Naive thymus-derived CD4-positive, alpha-beta T cell (primary cell): ENCODE measurements at regions of chr14 and their contacts with region 1.

Region 1: DNA sequence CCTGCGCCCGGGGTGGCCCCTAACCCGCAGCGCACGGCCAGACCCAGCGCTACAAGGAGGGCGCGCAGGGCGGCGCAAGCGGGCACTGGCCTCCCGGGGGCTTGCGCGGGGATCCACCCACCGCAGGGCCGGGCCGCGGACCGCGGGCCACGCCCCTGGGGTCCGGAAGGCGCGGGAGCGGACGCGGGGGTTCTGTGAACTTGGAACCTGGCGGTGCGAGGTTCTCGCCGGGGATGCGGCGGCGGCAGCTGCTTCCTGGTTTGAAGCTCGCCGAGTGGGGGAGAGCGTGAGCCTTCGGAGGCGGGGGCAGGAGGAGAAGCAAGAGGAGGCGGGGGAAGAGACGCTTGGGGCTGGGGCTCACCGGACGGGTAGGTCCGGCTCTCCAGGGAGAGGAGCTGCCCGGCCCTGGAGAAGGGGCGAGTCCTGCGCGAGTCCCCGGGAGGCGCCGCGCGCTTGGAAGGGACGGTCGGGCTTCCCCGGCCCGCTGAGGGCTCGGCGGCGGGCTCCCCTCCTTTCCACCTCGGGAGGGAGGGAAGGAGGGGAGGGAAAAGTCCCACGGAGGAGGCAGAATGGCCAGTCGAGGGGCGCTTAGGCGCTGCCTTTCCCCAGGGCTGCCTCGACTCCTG is at the start of gene PRKCH:
- DNase-seq: peak; percentile 67 to 87 (median 84)
- ATAC-seq: peak; percentile 87
- H3K4me3 ChIP-seq: peak within 1 kb of the TSS; percentile 90
- H3K4me3 Mint-ChIP-seq: peak within 1 kb of the TSS in 9 of 10 donors; percentile 95 to 100 (median 98)
- H3K27ac ChIP-seq: peak within 1 kb of the TSS; percentile 91
- H3K27ac Mint-ChIP-seq: peak within 1 kb of the TSS in 8 of 9 donors; percentile 93 to 99 (median 97)
- H3K4me1 ChIP-seq: peaks cover 20 to 22% of the 10 kb centered on the region in 2 donors
- H3K4me1 Mint-ChIP-seq: peaks cover 9 to 26% (median 25%) of the 10 kb centered on the region in 7 donors
- H3K27me3 ChIP-seq: no peaks in the 10 kb centered on the region
- H3K27me3 Mint-ChIP-seq: no peaks in the 10 kb centered on the region
- total RNA-seq, gene PRKCH: 224 to 359 (median 320) TPM

Region 2: DNA sequence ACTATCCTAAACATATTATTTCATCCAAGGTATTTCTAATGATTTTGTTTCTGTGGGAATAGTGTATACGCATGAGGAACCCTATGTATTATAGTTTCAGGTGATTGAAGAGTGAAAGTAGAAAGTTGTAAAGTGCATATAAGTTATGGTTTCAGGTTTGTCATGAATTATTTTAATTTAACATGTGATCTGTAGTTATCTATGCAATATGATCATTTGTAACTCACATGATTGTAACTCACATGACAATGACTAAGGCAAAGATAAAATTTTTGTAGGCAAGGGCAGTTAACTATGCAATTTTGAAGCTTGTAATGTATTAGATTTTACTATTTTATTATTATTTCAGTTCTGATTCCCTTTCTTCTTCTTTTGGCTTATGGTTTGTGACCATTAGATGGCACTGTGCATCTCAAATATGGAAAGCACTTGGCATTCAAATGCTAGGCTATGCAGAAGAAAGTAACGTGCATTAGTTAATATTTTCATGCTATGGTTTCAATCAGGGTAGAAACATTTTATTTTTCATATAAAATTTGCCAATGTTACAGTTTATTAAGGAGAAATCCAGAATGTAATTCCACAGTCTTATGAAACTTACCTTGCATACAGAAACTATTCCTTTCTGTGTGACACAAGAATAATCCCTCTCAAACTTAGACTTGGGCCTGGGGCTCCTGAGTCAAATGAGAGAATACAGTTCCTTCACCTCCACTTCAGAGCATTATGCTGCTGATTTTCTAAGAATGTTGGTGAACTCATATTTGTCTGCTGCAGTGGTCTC is 24.6 kb before region 1 on chr14:
- CTCF ChIA-PET with region 1: interaction called, 3 read pairs
- POLR2A ChIA-PET with region 1: interaction called, 3 read pairs
- intact Hi-C with region 1: loop called (anchors 2 kb)
- DNase-seq: peak in 7 of 9 donors; percentile 38 to 68 (median 52)
- ATAC-seq: peak; percentile 85
- H3K4me3 ChIP-seq: no peak overlapping the region
- H3K4me3 Mint-ChIP-seq: peak overlapping the region in 2 of 10 donors; percentile 20 to 39
- H3K27ac ChIP-seq: no peak overlapping the region
- H3K27ac Mint-ChIP-seq: peak overlapping the region in 7 of 9 donors; percentile 26 to 88 (median 66)
- H3K4me1 ChIP-seq: peaks cover 15 to 40% of the 10 kb centered on the region in 2 donors
- H3K4me1 Mint-ChIP-seq: peaks cover 18 to 59% (median 56%) of the 10 kb centered on the region in 7 donors
- H3K27me3 ChIP-seq: no peaks in the 10 kb centered on the region
- H3K27me3 Mint-ChIP-seq: no peaks in the 10 kb centered on the region

Region 3: DNA sequence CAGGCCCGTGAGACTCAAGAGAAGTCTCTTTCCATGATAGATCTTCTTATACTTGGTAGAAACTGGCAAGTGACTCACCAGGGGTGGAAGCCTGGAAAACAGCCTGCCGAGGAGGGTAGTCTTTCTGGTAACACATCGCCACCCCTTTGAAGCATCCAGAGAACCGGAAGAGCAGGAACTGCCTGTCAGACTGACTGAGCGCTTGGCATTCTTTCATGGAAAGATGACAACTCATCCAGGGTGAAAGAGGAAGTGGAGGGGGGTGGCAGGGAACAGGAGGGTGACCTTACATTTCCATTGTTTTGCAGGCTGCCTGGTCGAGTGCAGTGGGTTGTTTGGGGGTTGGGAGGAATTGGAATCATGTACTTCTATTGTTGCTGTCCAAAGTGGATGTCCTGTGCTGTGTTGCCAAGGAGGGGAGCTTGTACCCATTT is 34.4 kb after region 1 on chr14:
- CTCF ChIA-PET with region 1: no interaction called
- POLR2A ChIA-PET with region 1: interaction called, 3 read pairs
- intact Hi-C with region 1: loop called (anchors 5 kb)
- DNase-seq: peak in 2 of 9 donors; percentile 50 to 73
- ATAC-seq: peak; percentile 46
- H3K4me3 ChIP-seq: peak overlapping the region; percentile 15
- H3K4me3 Mint-ChIP-seq: peak overlapping the region; percentile 65 to 97 (median 80)
- H3K27ac ChIP-seq: peak overlapping the region; percentile 14
- H3K27ac Mint-ChIP-seq: peak overlapping the region in 8 of 9 donors; percentile 68 to 97 (median 89)
- H3K4me1 ChIP-seq: peaks cover 93% of the 10 kb centered on the region in 2 donors
- H3K4me1 Mint-ChIP-seq: peaks cover 0 to 96% (median 74%) of the 10 kb centered on the region in 7 donors
- H3K27me3 ChIP-seq: no peaks in the 10 kb centered on the region
- H3K27me3 Mint-ChIP-seq: no peaks in the 10 kb centered on the region

Region 4: DNA sequence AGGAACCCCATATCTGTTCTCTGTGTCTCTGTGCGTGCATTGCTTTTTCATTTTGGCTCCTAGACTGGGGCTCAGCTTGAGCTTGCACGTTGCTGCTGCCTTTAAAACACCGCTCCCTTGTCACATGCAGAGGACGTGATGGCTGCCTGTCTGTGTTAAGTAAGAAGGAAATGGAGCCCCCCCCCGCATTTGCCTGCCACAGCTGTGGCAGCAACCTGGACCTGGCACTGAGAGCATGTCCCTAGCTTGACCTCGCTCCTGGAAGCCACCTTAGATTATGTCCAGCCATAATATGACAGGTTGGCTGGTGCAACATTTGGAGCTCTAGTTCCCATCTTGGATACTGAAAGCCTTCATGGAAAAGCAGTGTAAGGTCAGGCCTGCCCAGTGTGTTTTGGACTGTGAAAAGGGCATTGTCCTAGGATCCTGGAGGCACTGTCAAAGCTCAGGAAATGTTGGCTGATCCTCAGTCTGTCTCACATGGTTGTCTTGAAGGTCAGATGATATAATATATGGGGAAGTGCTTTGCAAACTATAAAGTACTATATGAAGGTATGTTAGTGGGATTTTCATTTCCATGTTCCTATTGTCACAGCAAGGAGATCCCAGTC is 73.7 kb after region 1 on chr14:
- CTCF ChIA-PET with region 1: interaction called, 4 read pairs
- POLR2A ChIA-PET with region 1: interaction called, 14 read pairs
- intact Hi-C with region 1: no loop called
- DNase-seq: peak in 3 of 9 donors; percentile 30 to 51 (median 45)
- ATAC-seq: peak; percentile 55
- H3K4me3 ChIP-seq: no peak overlapping the region
- H3K4me3 Mint-ChIP-seq: peak overlapping the region in 8 of 10 donors; percentile 39 to 67 (median 62)
- H3K27ac ChIP-seq: peak overlapping the region; percentile 36
- H3K27ac Mint-ChIP-seq: peak overlapping the region in 8 of 9 donors; percentile 16 to 93 (median 82)
- H3K4me1 ChIP-seq: peaks cover 92 to 96% of the 10 kb centered on the region in 2 donors
- H3K4me1 Mint-ChIP-seq: peaks cover 0 to 93% (median 67%) of the 10 kb centered on the region in 7 donors
- H3K27me3 ChIP-seq: no peaks in the 10 kb centered on the region
- H3K27me3 Mint-ChIP-seq: no peaks in the 10 kb centered on the region

Region 5: GRCh38 chr14:61444215-61444768 is 122.8 kb after region 1 on chr14:
- CTCF ChIA-PET with region 1: interaction called, 5 read pairs
- POLR2A ChIA-PET with region 1: interaction called, 3 read pairs
- intact Hi-C with region 1: loop called (anchors 1 to 2 kb)
- DNase-seq: peak in 8 of 9 donors; percentile 36 to 77 (median 54)
- ATAC-seq: peak; percentile 89
- H3K4me3 ChIP-seq: peak overlapping the region; percentile 9
- H3K4me3 Mint-ChIP-seq: peak overlapping the region; percentile 61 to 89 (median 82)
- H3K27ac ChIP-seq: peak overlapping the region; percentile 59
- H3K27ac Mint-ChIP-seq: peak overlapping the region in 8 of 9 donors; percentile 86 to 97 (median 92)
- H3K4me1 ChIP-seq: peaks cover 77 to 90% of the 10 kb centered on the region in 2 donors
- H3K4me1 Mint-ChIP-seq: peaks cover 56 to 99% (median 93%) of the 10 kb centered on the region in 7 donors
- H3K27me3 ChIP-seq: no peaks in the 10 kb centered on the region
- H3K27me3 Mint-ChIP-seq: no peaks in the 10 kb centered on the region

Region 6: GRCh38 chr14:61761959-61762786 is 440.7 kb after region 1 on chr14 and contains the start of gene SNAPC1:
- CTCF ChIA-PET with region 1: no interaction called
- POLR2A ChIA-PET with region 1: no interaction called
- intact Hi-C with region 1: loop called in 1 of 2 experiments (anchors 5 kb)
- DNase-seq: peak; percentile 92 to 98 (median 96)
- ATAC-seq: peak; percentile 97
- H3K4me3 ChIP-seq: peak within 1 kb of the TSS; percentile 94
- H3K4me3 Mint-ChIP-seq: peak within 1 kb of the TSS; percentile 96 to 100 (median 98)
- H3K27ac ChIP-seq: peak within 1 kb of the TSS; percentile 95
- H3K27ac Mint-ChIP-seq: peak within 1 kb of the TSS; percentile 98 to 100 (median 99)
- H3K4me1 ChIP-seq: peaks cover 13 to 17% of the 10 kb centered on the region in 2 donors
- H3K4me1 Mint-ChIP-seq: peaks cover 27 to 62% (median 53%) of the 10 kb centered on the region in 7 donors
- H3K27me3 ChIP-seq: no peaks in the 10 kb centered on the region
- H3K27me3 Mint-ChIP-seq: peaks cover 0 to 4% (median 0%) of the 10 kb centered on the region in 5 donors
- total RNA-seq, gene SNAPC1: 3.5 to 8.7 (median 5.1) TPM